ENCODE measurements at regions of chr6 and their contacts with region 1.

Region 1: GRCh38 chr6:38493931-38494547 is 145.7 kb downstream of the BTBD9 start:
- DNase-seq: peak; percentile 60 to 72 (median 69)
- H3K4me3 ChIP-seq: no peak overlapping the region
- H3K4me3 Mint-ChIP-seq: no peak overlapping the region
- H3K27ac ChIP-seq: no peak overlapping the region
- H3K27ac Mint-ChIP-seq: no peak overlapping the region
- H3K4me1 ChIP-seq: no peaks in the 10 kb centered on the region
- H3K4me1 Mint-ChIP-seq: peaks cover 0 to 7% (median 2%) of the 10 kb centered on the region in 4 donors
- H3K27me3 ChIP-seq: no peaks in the 10 kb centered on the region
- H3K27me3 Mint-ChIP-seq: no peaks in the 10 kb centered on the region

Region 2: DNA sequence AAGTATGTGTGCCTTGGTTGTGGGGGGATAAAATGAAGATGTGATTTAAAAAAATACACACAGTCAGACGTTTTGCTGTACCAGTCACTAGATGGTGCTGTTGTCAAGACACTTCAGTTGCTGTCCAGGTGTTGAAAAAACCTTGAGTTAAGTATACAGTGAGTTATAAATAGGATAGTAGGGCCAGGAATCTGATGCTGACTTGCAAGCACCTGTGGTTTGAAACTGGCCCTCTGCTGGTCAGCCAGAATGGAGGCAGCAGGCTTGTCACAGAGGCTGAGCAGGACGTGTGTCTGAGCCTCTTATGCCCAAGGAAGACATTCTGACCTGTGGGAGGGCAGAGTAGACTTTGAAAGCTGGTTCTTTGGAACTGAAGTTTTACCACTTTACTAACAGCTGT is 1112.5 kb before region 1 on chr6:
- CTCF ChIA-PET with region 1: no interaction called
- POLR2A ChIA-PET with region 1: no interaction called
- intact Hi-C with region 1: loop called (anchors 5 kb)
- DNase-seq: peak; percentile 41 to 55 (median 45)
- H3K4me3 ChIP-seq: no peak overlapping the region
- H3K4me3 Mint-ChIP-seq: no peak overlapping the region
- H3K27ac ChIP-seq: no peak overlapping the region
- H3K27ac Mint-ChIP-seq: peak overlapping the region in 2 of 7 donors; percentile 25 to 33
- H3K4me1 ChIP-seq: no peaks in the 10 kb centered on the region
- H3K4me1 Mint-ChIP-seq: peaks cover 0 to 2% (median 0%) of the 10 kb centered on the region in 4 donors
- H3K27me3 ChIP-seq: no peaks in the 10 kb centered on the region
- H3K27me3 Mint-ChIP-seq: no peaks in the 10 kb centered on the region

Region 3: DNA sequence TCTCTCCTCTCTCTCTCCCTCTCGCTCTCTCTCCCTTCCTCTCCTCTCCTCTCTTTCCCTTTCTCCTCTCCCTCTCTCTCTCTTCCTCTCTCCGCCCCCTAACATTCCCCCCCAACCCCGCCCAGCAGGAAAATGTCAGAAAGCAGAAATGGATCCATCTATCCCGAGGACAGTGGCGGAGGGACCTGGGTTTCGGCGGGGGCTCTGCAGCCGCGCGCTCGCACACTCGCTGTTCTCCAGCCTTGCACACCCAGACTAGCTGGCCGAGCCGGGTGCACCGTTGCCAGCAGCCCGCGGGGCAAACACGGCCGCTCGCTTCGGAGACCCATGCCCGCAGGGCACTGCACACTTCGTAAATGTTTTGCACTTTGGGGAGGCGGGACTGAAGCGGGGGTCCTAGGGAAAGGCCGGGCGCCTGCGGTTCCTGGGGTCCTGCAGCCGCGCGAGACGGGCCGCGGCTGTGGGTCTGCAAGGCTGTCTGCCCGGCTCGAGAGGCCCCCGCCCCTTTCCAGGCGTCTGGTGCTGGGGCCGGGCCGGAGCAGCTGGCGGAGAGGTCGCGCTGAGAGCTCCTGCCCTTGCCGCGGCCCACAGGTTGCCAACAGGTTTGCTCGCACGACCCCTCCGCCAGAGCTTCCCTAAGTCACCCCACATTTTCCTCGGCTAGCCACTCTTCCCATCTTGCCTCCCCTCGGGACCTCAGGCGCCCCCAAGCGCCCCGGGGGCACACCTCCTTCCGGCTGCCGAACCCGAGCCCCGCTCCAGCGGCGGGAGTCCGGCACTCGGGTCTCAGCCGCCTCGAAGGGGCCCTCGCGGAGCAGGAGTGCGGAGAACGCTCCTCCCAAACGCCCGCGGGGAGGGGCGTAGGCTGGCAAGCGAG is 795.5 kb before region 1 on chr6:
- CTCF ChIA-PET with region 1: interaction called, 3 read pairs
- POLR2A ChIA-PET with region 1: no interaction called
- intact Hi-C with region 1: loop called (anchors 2 kb)
- DNase-seq: peak; percentile 66 to 85 (median 74)
- H3K4me3 ChIP-seq: peak overlapping the region; percentile 47 to 60
- H3K4me3 Mint-ChIP-seq: peak overlapping the region; percentile 92 to 100 (median 100)
- H3K27ac ChIP-seq: peak overlapping the region; percentile 33
- H3K27ac Mint-ChIP-seq: peak overlapping the region; percentile 92 to 100 (median 98)
- H3K4me1 ChIP-seq: peaks cover 17% of the 10 kb centered on the region
- H3K4me1 Mint-ChIP-seq: peaks cover 17 to 52% (median 26%) of the 10 kb centered on the region in 4 donors
- H3K27me3 ChIP-seq: peaks cover 14% of the 10 kb centered on the region
- H3K27me3 Mint-ChIP-seq: peaks cover 0 to 6% of the 10 kb centered on the region in 2 donors

Region 4: DNA sequence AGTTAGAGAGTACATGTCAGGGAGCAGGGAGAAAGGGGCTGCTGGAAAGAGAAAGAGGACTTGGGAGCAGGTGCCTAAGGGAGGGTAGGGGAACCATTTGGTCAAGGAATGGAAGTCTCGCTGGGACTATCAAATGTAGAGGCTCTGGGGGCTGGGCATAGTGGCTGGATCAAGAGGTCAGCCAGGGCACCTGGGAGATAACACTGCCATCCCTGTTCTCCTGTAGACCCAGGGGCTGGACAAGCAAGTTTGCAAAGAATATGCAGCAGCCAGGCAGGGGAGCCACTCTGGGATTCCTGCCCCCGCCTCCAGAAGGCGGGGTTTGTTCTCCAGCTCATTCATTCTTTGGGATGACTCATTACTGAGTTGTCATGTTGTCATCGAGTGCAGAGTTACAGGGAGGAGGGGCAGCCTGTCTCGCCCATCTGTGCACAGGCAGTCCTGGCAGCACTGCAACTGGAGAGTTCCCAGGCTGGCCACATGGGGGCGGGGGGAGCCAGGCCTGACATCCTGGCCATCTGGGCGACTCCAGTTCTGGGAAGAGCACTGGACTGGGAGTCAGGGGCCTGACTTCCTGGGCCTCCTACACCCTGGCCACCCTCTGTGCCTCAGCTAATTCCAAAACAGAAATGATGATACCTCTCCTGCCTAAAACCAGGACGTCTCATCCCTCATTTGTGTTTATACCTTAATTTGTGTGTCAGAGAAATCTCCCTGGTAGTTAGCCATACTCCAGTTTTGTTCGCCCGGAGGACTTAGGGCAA is 702.7 kb before region 1 on chr6:
- CTCF ChIA-PET with region 1: interaction called, 7 read pairs
- POLR2A ChIA-PET with region 1: no interaction called
- intact Hi-C with region 1: loop called (anchors 1 kb)
- DNase-seq: peak; percentile 55 to 87 (median 63)
- H3K4me3 ChIP-seq: no peak overlapping the region
- H3K4me3 Mint-ChIP-seq: no peak overlapping the region
- H3K27ac ChIP-seq: no peak overlapping the region
- H3K27ac Mint-ChIP-seq: peak overlapping the region in 1 of 7 donors; percentile 38
- H3K4me1 ChIP-seq: no peaks in the 10 kb centered on the region
- H3K4me1 Mint-ChIP-seq: peaks cover 2 to 9% (median 5%) of the 10 kb centered on the region in 4 donors
- H3K27me3 ChIP-seq: no peaks in the 10 kb centered on the region
- H3K27me3 Mint-ChIP-seq: peaks cover 0 to 1% of the 10 kb centered on the region in 2 donors

Region 5: GRCh38 chr6:38477680-38478260 is 16.3 kb before region 1 on chr6:
- CTCF ChIA-PET with region 1: interaction called, 27 read pairs
- POLR2A ChIA-PET with region 1: no interaction called
- intact Hi-C with region 1: no loop called
- DNase-seq: no peak
- H3K4me3 ChIP-seq: no peak overlapping the region
- H3K4me3 Mint-ChIP-seq: no peak overlapping the region
- H3K27ac ChIP-seq: no peak overlapping the region
- H3K27ac Mint-ChIP-seq: no peak overlapping the region
- H3K4me1 ChIP-seq: no peaks in the 10 kb centered on the region
- H3K4me1 Mint-ChIP-seq: peaks cover 2 to 8% (median 4%) of the 10 kb centered on the region in 4 donors
- H3K27me3 ChIP-seq: no peaks in the 10 kb centered on the region
- H3K27me3 Mint-ChIP-seq: no peaks in the 10 kb centered on the region

Region 6: DNA sequence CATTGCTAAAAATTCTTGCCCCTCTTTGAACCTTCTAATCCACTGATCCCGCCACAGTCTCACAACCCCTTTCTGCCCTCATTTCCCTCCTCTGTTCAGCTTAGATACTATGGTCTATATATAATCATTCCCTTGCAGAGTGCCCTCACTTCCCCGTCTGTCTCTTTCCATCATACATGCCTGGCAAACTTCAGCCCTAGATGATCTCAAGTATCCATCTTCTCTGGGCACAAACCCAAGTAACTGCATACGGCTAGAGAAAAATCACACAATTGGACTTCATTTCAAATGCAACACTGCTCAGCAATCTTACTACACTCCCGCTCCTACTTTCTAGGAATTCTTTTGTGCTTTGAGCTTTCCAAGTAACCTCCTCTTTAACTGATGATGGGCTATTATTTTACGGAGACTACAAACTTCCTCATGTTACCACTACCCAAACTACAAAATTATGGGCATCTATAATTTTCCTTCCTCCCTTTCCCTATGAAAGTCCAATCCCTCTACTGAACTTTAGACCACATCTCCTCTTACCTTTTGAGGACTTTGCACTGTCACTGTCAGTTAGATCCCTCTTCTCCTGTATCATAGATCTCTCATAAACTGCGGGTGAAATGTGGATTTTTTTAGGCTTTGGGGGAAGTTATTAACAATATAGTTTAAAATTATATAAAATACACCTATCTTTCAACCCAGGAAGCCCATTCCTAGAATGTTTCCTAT is 10.1 kb after region 1 on chr6:
- CTCF ChIA-PET with region 1: interaction called, 11 read pairs
- POLR2A ChIA-PET with region 1: no interaction called
- intact Hi-C with region 1: no loop called
- DNase-seq: no peak
- H3K4me3 ChIP-seq: no peak overlapping the region
- H3K4me3 Mint-ChIP-seq: no peak overlapping the region
- H3K27ac ChIP-seq: no peak overlapping the region
- H3K27ac Mint-ChIP-seq: no peak overlapping the region
- H3K4me1 ChIP-seq: no peaks in the 10 kb centered on the region
- H3K4me1 Mint-ChIP-seq: peaks cover 0 to 3% (median 0%) of the 10 kb centered on the region in 4 donors
- H3K27me3 ChIP-seq: no peaks in the 10 kb centered on the region
- H3K27me3 Mint-ChIP-seq: no peaks in the 10 kb centered on the region

Region 7: DNA sequence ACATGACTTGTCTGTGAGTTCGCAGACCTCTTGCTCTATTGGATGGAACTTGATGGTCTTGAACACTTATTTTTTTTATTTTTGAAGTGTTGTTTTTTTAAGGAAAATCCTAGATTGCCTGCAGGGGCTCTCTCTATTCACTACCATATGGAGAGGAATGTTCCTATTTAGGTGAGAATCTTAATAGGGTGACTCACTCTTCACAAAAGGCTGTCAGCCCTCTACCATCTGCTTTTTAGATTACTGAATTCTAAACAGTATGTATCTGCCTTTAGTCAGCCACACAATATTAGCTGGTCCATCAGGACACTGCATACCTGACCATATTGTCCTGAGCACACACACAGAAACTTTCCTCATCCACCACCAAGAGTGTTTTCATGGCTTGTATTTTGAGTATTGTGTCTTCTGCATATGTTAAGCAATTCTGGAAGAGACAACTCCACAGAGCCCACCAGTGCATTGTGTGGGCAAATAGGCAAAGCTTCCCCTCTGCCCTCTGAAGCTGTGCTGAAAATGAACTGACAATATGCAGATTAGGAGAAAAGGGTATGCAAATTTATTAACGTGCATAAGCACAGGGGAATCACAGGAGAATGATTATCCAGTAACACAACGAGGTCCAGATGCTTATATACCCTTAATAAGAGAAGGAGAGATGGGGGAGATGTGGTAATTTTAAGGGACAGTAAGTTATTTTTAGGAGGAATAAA is 152.3 kb after region 1 on chr6:
- CTCF ChIA-PET with region 1: no interaction called
- POLR2A ChIA-PET with region 1: no interaction called
- intact Hi-C with region 1: no loop called
- DNase-seq: no peak
- H3K4me3 ChIP-seq: no peak overlapping the region
- H3K4me3 Mint-ChIP-seq: no peak overlapping the region
- H3K27ac ChIP-seq: no peak overlapping the region
- H3K27ac Mint-ChIP-seq: no peak overlapping the region
- H3K4me1 ChIP-seq: peaks cover under 1% of the 10 kb centered on the region
- H3K4me1 Mint-ChIP-seq: peaks cover 5 to 8% (median 5%) of the 10 kb centered on the region in 4 donors
- H3K27me3 ChIP-seq: no peaks in the 10 kb centered on the region
- H3K27me3 Mint-ChIP-seq: no peaks in the 10 kb centered on the region

Measured in CD4-positive, alpha-beta memory T cell (primary cell).